Panc1 (cell line): ENCODE measurements at regions of chr1 and their contacts with region 1.

Region 1: GRCh38 chr1:31644560-31645273 is at the start of gene PEF1:
- DNase-seq: peak; percentile 92
- ATAC-seq: peak; percentile 97
- H3K4me3 ChIP-seq: peak within 1 kb of the TSS; percentile 88 to 97
- H3K27ac ChIP-seq: peak within 1 kb of the TSS; percentile 96
- H3K4me1 ChIP-seq: peaks cover 19% of the 10 kb centered on the region
- H3K27me3 ChIP-seq: no peaks in the 10 kb centered on the region
- CTCF ChIP-seq: no peak
- total RNA-seq, gene PEF1: 58.4 TPM

Region 2: DNA sequence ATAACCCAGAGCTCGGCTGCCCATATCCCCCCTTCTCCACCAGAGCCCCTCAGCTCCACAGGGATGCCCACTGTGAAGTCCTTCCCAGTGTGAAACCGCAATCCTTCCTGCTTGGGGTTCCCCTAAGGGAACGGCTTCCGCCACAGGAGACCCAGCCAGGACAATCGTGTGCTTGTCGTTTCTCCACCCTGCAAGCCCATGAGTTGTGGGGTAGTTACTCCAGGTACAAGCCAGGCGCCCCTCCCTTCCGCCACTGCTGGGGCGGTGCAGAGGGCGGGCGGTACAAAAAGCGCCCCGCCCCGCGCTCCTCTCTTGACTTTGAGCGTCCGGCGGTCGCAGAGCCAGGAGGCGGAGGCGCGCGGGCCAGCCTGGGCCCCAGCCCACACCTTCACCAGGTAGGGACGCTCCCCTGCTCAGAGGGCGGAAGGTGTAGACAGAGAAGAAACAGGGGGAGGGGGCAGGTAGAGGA is 68.5 kb before region 1 on chr1 and contains the start of gene TINAGL1:
- CTCF ChIA-PET with region 1: no interaction called
- POLR2A ChIA-PET with region 1: no interaction called
- in situ Hi-C with region 1: no loop called
- intact Hi-C with region 1: no loop called
- DNase-seq: no peak
- ATAC-seq: peak; percentile 27
- H3K4me3 ChIP-seq: peak within 1 kb of the TSS; percentile 32 to 34
- H3K27ac ChIP-seq: peak within 1 kb of the TSS; percentile 75
- H3K4me1 ChIP-seq: peaks cover 58% of the 10 kb centered on the region
- H3K27me3 ChIP-seq: no peaks in the 10 kb centered on the region
- CTCF ChIP-seq: no peak
- total RNA-seq, gene TINAGL1: 6.1 TPM

Region 3: GRCh38 chr1:31587720-31588394 is 56.9 kb before region 1 on chr1:
- CTCF ChIA-PET with region 1: no interaction called
- POLR2A ChIA-PET with region 1: interaction called, 11 read pairs
- in situ Hi-C with region 1: no loop called
- intact Hi-C with region 1: no loop called
- DNase-seq: no peak
- ATAC-seq: peak; percentile 75
- H3K4me3 ChIP-seq: no peak overlapping the region
- H3K27ac ChIP-seq: peak overlapping the region; percentile 71
- H3K4me1 ChIP-seq: peaks cover 33% of the 10 kb centered on the region
- H3K27me3 ChIP-seq: no peaks in the 10 kb centered on the region
- CTCF ChIP-seq: peak; percentile 91

Region 4: DNA sequence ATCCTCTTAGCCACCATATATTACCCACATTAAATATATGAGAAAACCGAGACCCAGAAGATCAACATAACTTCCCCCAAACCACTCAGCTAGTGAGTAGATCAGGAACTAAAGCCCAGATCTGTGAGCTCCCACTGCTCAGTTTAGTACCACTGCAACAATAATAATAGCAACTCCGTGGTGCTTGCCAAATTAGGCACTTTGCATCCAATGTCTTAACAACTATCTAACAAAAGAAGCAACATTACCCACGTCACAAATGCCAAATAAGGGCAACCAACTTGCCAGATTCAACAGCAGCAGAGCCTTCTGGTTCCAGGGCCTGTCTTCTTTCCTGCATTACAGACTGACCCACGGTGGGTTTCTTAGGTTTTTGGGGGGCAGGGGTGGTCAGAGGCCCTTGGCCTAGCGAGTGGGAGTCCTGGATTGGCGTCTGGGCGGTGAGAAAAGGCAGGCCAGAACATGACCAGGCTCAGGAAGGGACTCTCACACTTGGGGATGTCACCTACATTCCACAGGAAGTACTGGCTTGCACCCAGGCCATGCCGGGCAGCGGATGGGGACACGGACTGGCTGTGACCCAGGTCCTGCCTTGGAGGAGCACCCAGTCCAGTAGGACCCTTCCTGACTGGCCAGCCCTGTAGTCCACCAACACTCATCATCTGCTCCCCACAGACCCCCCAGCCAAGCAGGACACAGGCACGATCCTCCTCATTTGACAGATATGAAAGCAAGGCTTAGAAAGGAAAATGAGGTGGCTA is 22.7 kb before region 1 on chr1:
- CTCF ChIA-PET with region 1: no interaction called
- POLR2A ChIA-PET with region 1: no interaction called
- in situ Hi-C with region 1: no loop called
- intact Hi-C with region 1: no loop called
- DNase-seq: no peak
- ATAC-seq: no peak
- H3K4me3 ChIP-seq: no peak overlapping the region
- H3K27ac ChIP-seq: no peak overlapping the region
- H3K4me1 ChIP-seq: no peaks in the 10 kb centered on the region; the same call in 1 of the 2 replicates
- H3K27me3 ChIP-seq: peaks cover 5% of the 10 kb centered on the region
- CTCF ChIP-seq: no peak

Region 5: GRCh38 chr1:31633053-31633452 is 11.7 kb before region 1 on chr1:
- CTCF ChIA-PET with region 1: no interaction called
- POLR2A ChIA-PET with region 1: interaction called, 10 read pairs
- in situ Hi-C with region 1: no loop called
- intact Hi-C with region 1: no loop called
- DNase-seq: no peak
- ATAC-seq: peak; percentile 55; the same call in 1 of the 2 replicates
- H3K4me3 ChIP-seq: no peak overlapping the region
- H3K27ac ChIP-seq: no peak overlapping the region
- H3K4me1 ChIP-seq: no peaks in the 10 kb centered on the region
- H3K27me3 ChIP-seq: no peaks in the 10 kb centered on the region
- CTCF ChIP-seq: no peak; the same call in 1 of the 2 replicates

Region 6: GRCh38 chr1:31803610-31804009 is 158.9 kb after region 1 on chr1:
- CTCF ChIA-PET with region 1: no interaction called
- POLR2A ChIA-PET with region 1: interaction called, 20 read pairs
- in situ Hi-C with region 1: no loop called
- intact Hi-C with region 1: no loop called
- DNase-seq: no peak
- ATAC-seq: no peak
- H3K4me3 ChIP-seq: no peak overlapping the region
- H3K27ac ChIP-seq: no peak overlapping the region
- H3K4me1 ChIP-seq: peaks cover 1% of the 10 kb centered on the region; the same call in 1 of the 2 replicates
- H3K27me3 ChIP-seq: no peaks in the 10 kb centered on the region
- CTCF ChIP-seq: no peak

Region 7: GRCh38 chr1:31995263-31995662 is 350.5 kb after region 1 on chr1:
- CTCF ChIA-PET with region 1: no interaction called
- POLR2A ChIA-PET with region 1: interaction called, 16 read pairs
- in situ Hi-C with region 1: no loop called
- intact Hi-C with region 1: no loop called
- DNase-seq: no peak
- ATAC-seq: no peak
- H3K4me3 ChIP-seq: no peak overlapping the region
- H3K27ac ChIP-seq: no peak overlapping the region
- H3K4me1 ChIP-seq: no peaks in the 10 kb centered on the region
- H3K27me3 ChIP-seq: no peaks in the 10 kb centered on the region
- CTCF ChIP-seq: no peak

Region 8: DNA sequence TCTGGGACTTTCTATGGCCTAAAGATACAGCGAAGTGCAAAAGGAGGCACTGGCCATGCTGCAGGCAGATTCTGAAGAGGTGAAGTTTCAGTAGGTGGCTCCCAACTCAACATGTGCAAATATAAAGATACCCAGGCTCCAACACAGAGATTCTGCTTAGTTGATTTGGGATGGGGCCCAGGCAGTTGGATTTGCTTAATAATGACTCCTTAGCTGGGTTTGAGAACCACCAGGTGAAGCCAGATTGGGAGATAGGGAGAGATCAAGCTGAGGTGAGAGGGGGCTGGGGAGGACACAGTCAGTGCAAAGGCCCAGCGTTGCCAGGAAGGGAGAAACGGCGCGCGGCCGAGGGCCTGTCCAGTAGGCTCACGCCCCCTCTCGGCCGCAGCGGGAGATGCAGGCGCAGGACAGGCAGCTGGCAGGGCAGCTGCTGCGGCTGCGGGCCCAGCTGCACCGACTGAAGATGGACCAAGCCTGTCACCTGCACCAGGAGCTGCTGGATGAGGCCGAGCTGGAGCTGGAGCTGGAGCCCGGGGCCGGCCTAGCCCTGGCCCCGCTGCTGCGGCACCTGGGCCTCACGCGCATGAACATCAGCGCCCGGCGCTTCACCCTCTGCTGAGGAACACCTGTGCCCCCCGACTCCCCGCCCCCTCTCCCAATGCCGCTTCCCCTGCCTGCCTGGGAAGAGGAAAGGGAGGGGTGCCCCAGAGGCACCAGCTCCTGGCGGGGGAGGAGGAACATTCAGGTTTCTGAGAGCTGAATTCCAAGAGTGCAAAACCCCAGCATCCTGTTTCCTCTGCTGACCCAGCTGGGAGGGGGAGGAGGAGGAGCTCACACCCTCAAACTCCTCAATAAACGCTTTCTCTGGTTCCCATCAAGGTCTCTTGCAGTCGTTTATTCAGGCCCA is 603.5 kb after region 1 on chr1:
- CTCF ChIA-PET with region 1: no interaction called
- POLR2A ChIA-PET with region 1: no interaction called
- in situ Hi-C with region 1: no loop called
- intact Hi-C with region 1: no loop called
- DNase-seq: no peak
- ATAC-seq: peak; percentile 89
- H3K4me3 ChIP-seq: no peak overlapping the region
- H3K27ac ChIP-seq: no peak overlapping the region
- H3K4me1 ChIP-seq: peaks cover 5% of the 10 kb centered on the region
- H3K27me3 ChIP-seq: no peaks in the 10 kb centered on the region
- CTCF ChIP-seq: peak; percentile 96

Region 9: GRCh38 chr1:32592943-32593342 is 948.2 kb after region 1 on chr1:
- CTCF ChIA-PET with region 1: no interaction called
- POLR2A ChIA-PET with region 1: no interaction called
- in situ Hi-C with region 1: no loop called
- intact Hi-C with region 1: no loop called
- DNase-seq: no peak
- ATAC-seq: no peak
- H3K4me3 ChIP-seq: no peak overlapping the region
- H3K27ac ChIP-seq: no peak overlapping the region
- H3K4me1 ChIP-seq: no peaks in the 10 kb centered on the region
- H3K27me3 ChIP-seq: no peaks in the 10 kb centered on the region
- CTCF ChIP-seq: no peak